ENCODE measurements at regions of chr9 and their contacts with region 1.

Region 1: GRCh38 chr9:6703898-6704639 is 53.7 kb upstream of the KDM4C start:
- DNase-seq: peak; percentile 84
- H3K4me3 Mint-ChIP-seq: peak overlapping the region; percentile 89
- H3K27ac Mint-ChIP-seq: peak overlapping the region; percentile 91
- H3K4me1 Mint-ChIP-seq: peaks cover 14% of the 10 kb centered on the region
- H3K27me3 Mint-ChIP-seq: peaks cover 4% of the 10 kb centered on the region

Region 2: DNA sequence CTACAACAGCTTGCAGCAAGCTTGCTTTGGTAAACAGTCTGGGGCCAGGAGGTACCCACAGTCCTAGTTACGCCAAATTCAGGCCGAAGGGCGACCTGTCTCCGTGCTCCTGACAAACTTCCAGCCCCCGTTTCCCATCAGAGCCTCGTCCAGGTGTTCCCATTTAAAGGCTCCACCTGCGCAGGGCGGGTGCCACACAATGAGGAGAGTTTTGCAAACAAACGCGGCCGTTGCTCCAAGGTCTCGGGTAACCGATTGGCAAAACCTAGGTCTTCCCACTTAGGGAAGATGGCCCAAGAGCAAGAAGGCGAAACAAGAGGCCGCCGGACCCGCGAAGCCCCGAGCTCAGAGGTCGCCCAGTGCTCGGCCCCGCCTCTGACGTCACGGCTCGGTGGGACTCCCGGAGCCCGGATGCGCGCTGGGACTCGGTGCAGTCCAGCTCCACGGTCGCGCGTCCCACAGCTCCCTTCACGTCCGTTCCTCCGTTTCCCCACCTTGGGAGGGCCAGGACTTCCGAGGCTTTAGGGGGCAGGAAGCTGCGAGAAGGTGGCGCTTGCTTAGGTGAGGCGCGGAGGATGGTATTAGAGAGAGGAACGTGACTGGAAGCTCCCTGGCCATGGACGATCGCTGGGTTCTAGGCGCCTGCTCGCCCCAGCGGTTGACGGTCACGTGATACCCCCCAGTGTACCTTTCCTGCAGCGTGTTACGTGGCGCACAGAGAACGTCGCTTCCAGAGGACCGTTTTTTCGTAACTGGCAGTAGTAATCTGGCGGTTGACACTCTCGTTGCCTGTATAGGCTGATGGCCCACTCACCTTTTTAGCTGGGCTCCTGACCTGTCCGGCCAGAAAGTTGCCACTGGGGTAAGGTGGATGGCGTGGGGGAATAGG is 11.9 kb after region 1 on chr9:
- intact Hi-C with region 1: loop called (anchors 1 kb)
- DNase-seq: peak; percentile 61
- H3K4me3 Mint-ChIP-seq: peak overlapping the region; percentile 84
- H3K27ac Mint-ChIP-seq: peak overlapping the region; percentile 83
- H3K4me1 Mint-ChIP-seq: peaks cover 7% of the 10 kb centered on the region
- H3K27me3 Mint-ChIP-seq: peaks cover 4% of the 10 kb centered on the region